Left cardiac atrium (tissue), 4 donors: ENCODE measurements at regions of chr15 and their contacts with region 1.

Region 1: DNA sequence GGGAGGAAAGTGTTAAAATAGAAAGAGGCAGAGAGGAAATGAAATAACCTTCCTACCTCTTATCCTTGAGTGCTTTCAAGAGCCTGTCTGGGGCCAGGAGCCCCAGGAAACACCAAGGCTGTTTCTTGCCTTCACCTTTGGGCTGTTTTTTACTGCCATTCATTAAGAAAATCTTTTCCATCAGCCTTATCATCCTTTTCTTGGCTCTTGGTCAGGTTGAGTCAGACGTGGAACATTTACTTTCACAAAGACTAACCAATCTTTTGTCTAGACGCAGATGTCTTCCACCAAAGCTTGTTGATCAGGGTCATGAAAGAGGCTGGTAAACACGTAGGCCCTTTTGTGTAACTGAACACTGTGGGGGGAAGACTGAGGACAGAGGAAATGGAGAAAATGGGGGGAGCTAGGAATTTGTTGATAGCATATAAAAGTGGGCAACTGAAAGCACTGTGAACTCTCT is 151.0 kb upstream of the THBS1 start:
- DNase-seq: no peak
- ATAC-seq: no peak

Region 2: GRCh38 chr15:39213385-39213840 is 216.5 kb before region 1 on chr15:
- intact Hi-C with region 1: loop called in 1 of 2 experiments (anchors 10 kb)
- DNase-seq: peak; percentile 77
- ATAC-seq: peak; percentile 97 to 99

Region 3: GRCh38 chr15:39327005-39327730 is 102.8 kb before region 1 on chr15:
- intact Hi-C with region 1: no loop called
- DNase-seq: no peak
- ATAC-seq: peak in 1 of 2 donors; percentile 71

Region 4: DNA sequence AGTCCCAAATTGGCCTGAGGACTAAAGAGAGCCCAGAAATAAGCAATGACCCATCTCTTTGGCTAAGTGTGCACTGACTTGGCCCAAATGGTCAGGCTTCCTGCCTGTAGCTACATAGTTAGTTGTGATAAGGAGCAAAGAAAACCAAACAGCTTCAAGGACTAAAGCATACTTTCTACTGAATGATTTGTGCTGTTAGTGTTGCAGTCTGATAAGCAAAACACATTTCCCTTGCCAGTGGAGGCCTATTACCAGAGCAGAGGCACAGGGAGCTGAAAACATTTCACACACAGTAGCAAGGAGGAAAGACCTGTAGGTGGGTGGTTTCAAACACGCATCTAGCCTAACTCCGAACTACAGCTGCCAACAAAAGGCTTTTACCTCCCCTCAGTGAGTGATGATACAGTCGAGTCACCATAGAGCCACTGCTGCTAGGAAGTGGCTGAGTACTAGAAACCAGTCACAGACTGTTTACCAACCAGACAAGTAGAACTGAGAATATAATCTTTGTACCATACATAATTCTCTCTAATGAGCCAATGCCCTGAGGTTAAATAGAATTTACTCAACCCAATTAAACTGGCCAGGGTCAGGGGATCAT is 71.4 kb before region 1 on chr15:
- intact Hi-C with region 1: loop called in 1 of 2 experiments (anchors 10 kb)
- DNase-seq: peak; percentile 52
- ATAC-seq: peak; percentile 92 to 93

Region 5: GRCh38 chr15:40002295-40002694 is 572.4 kb after region 1 on chr15:
- intact Hi-C with region 1: no loop called
- DNase-seq: no peak
- ATAC-seq: no peak